Activated T-helper 1 cell treated with anti-CD3 and anti-CD28 coated beads, Interleukin-12 subunit alpha, Interleukin-12 subunit beta, Interleukin-2, Interleukin-4 antibody, amounts not matched to agents 30 ng/mL and 10 ng/mL and 1 ng/mL, durations not matched to agents 14 hours and 24 hours and 36 hours (primary cell): ENCODE measurements at regions of chr12 and their contacts with region 1.

Region 1: DNA sequence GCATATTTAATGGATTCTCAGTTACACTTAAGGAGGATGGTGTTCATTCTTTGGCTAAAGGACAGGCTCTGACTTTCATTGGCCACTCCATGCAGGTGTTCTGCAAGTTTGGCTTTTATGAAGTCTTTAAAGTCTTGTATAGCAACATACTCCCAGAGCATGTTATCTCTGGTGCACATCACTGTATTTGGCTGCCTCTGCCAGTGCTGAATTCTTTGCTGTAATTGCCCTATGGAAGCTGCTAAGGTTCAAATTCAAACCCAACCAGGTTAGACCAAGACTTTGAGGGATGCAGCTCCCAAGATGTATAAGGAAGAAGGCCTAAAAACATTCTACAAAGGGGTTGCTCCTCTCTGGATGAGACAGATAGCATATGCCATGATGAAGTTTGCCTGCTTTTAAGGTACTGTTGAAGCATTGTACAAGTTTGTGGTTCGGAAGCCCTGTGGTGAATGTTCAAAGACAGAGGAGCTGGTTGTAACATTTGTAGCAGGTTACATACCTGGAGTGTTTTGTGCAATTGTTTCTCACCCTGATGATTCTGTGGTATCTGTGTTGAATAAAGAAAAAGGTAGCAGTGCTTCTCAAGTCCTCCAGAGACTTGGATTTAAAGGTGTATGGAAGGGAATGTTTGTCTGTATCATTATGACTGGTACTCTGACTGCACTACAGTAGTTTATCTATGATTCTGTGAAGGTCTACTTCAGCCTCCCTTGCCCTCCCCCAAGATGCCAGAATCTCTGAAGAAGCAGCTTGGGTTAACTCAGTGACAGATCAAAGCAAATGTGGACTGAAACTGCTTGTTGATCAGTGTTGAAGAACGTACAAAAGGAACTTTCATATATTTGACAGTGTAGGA is 19.4 kb downstream of the TMEM116 start:
- DNase-seq: peak; percentile 30
- H3K4me3 Mint-ChIP-seq: peak overlapping the region; percentile 78
- H3K27ac Mint-ChIP-seq: peak overlapping the region; percentile 81
- H3K4me1 Mint-ChIP-seq: peaks cover 67% of the 10 kb centered on the region
- H3K27me3 Mint-ChIP-seq: no peaks in the 10 kb centered on the region

Region 2: GRCh38 chr12:111636209-111636945 is 357.1 kb before region 1 on chr12:
- intact Hi-C with region 1: no loop called
- DNase-seq: no peak
- H3K4me3 Mint-ChIP-seq: no peak overlapping the region
- H3K27ac Mint-ChIP-seq: no peak overlapping the region
- H3K4me1 Mint-ChIP-seq: no peaks in the 10 kb centered on the region
- H3K27me3 Mint-ChIP-seq: no peaks in the 10 kb centered on the region

Region 3: GRCh38 chr12:111812881-111813741 is 180.4 kb before region 1 on chr12:
- intact Hi-C with region 1: no loop called
- DNase-seq: peak; percentile 47
- H3K4me3 Mint-ChIP-seq: no peak overlapping the region
- H3K27ac Mint-ChIP-seq: no peak overlapping the region
- H3K4me1 Mint-ChIP-seq: peaks cover 6% of the 10 kb centered on the region
- H3K27me3 Mint-ChIP-seq: peaks cover 2% of the 10 kb centered on the region

Region 4: DNA sequence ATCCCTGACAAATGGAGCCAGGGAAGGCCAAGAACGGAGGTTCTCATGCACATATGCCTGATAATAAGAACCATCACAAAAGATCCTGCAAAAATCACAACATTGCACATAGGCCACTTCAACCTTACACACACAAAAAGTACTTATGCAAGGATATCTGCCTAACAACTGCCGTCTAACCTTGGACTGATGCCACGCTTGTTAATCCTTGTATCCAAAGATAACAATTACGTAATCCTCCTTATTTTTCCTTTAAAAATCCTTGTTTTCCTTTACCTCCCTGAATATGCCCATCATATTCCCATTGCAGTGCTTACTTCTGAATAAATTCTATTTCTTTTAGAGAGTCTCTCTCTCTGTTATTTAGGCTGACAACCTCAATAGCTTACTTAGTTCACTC is 40.1 kb before region 1 on chr12:
- intact Hi-C with region 1: loop called (anchors 1 kb)
- DNase-seq: no peak
- H3K4me3 Mint-ChIP-seq: no peak overlapping the region
- H3K27ac Mint-ChIP-seq: no peak overlapping the region
- H3K4me1 Mint-ChIP-seq: peaks cover 37% of the 10 kb centered on the region
- H3K27me3 Mint-ChIP-seq: peaks cover 2% of the 10 kb centered on the region